A673 (cell line): ENCODE measurements at regions of chr11 and their contacts with region 1.

Region 1: DNA sequence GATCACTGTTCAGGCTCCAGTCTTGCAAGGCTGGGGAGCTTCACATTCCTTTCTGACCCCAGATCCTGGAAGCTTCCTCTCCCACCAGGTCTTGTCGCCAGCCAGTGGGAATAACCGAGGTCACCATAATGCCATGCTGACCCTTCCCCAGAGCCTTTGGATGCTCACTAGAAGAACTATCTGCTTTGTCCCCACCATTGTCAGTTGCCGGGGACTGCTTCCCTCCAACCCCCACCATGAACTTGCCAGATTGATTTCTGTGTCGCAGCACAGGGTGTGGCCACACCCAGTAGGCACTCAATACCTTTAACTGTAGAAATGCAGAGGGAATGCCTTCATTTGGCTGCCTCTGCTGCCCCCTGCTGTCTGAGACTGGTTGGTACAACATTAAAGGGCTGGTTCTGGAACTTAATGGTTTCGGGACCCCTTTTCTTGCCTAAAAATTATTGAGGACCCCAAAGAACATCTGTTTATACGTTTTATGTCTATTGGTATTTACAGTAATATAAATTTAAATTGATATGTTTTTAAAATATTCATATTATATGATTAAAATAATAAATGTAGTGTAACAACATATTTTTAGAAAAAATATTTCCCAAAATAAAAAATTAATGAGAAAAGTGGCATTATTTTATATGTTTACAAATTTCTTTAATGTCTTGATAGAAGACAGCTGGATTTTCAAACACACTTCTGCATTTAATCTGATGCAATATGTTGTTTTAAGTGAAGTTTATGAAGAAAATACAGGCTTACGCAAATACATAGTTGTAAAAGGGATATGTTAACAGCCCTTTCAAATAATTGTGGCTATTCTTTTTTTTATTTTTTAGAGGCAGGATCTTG is 6.7 kb upstream of the GDPD5 start:
- DNase-seq: peak; percentile 89
- H3K4me3 ChIP-seq: no peak overlapping the region
- H3K27ac ChIP-seq: no peak overlapping the region
- H3K4me1 ChIP-seq: peaks cover 7% of the 10 kb centered on the region
- H3K27me3 ChIP-seq: no peaks in the 10 kb centered on the region
- CTCF ChIP-seq: peak; percentile 96

Region 2: DNA sequence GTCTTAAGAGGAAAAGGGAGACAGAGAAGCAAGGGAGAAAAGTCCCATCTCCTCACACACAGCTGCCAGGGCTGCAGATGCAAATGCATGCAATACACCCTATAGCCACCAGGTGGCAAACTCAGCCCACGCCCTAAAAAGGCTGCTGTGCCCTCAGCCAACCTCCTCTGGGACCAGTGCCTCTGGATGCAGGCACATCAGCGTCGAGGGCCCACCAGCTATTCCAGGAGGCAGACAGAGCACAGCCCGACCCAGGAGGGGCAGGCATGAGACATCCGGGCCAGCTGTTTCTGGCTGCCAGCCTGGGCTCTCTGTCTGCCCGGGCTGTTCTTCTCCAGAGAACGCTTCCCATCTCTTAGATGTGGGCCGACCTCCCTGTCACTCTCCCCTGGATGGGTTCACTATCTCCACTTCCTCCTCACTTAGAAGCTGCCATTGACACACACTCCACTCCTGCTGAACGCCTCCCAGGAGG is 252.2 kb before region 1 on chr11:
- CTCF ChIA-PET with region 1: interaction called, 4 read pairs
- POLR2A ChIA-PET with region 1: no interaction called
- intact Hi-C with region 1: loop called (anchors 2 kb)
- DNase-seq: peak; percentile 85
- H3K4me3 ChIP-seq: no peak overlapping the region
- H3K27ac ChIP-seq: no peak overlapping the region
- H3K4me1 ChIP-seq: no peaks in the 10 kb centered on the region
- H3K27me3 ChIP-seq: no peaks in the 10 kb centered on the region
- CTCF ChIP-seq: peak; percentile 98

Region 3: DNA sequence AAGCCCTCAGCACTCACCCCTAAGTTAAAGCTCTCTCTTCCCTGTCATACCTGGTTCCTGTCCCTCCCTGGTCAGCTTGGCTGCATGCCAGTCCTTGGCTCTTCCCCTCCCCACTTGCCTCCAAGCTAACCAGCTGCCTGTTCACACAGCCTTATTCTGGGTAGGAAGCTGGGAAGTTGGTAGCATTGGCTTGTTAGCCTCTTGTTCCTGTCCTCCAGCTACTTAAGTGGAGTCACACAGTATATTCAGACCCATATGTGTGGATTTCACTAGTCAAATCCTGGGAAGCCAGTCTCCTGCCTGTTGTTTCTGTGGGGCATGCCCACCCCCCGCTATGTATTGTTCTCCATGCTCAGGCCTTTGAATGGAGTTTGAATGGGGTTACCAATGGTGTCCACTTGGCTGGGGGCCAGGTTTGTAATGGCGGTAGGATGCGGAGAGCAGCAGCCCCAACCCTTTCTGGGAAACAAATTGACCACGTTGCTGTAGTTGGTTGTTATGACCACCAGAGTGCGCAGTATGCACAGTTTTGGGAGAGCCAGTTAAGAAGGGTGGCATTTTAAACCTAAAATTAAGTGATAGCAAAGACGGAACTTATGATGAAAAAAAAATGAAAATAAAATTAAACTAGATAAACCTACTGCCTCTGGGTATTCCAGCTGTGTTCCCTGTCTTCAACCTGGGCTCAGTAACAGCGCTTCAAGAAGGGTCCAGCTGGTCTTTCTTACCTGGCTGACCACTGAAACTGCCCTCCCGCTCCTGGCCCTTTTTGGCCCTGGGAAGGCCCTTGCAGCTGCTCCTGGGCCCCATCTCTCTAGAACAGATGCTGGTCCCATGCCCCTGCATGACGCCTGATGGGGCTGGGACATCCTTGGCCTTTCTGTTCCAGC is 143.8 kb before region 1 on chr11:
- CTCF ChIA-PET with region 1: interaction called, 3 read pairs
- POLR2A ChIA-PET with region 1: no interaction called
- intact Hi-C with region 1: loop called (anchors 1 kb)
- DNase-seq: peak; percentile 92
- H3K4me3 ChIP-seq: no peak overlapping the region
- H3K27ac ChIP-seq: no peak overlapping the region
- H3K4me1 ChIP-seq: no peaks in the 10 kb centered on the region
- H3K27me3 ChIP-seq: no peaks in the 10 kb centered on the region
- CTCF ChIP-seq: peak; percentile 95

Region 4: DNA sequence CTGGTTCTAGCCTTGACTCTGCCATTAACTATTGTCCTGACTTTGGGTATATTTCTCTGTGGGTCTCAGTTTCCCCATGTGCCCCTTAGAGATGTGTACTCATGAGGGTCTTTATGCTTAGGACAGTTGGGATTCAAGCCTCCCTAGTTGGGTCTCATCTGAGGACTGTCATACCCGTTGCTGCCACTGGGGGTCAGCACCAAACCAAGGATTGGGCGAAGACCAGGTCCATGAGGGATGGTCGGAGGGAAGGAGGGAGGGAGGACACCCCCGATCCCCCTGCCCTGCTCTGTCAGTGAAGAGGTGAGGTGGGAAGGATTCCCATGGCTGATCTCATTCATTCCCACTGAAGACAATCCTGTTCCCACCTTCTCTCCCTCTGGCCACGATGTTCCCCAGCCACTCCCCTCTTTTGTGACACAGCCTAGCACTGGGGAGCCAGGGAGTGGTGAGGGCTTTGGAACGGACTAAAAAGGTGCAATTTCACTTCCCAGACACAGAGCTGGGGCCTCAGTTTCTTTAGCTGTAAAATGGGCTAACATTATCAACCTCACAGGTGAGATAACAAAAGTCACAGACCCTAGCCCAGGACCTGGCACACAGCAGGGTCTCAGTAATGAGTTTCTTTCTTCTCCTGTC is 87.0 kb before region 1 on chr11:
- CTCF ChIA-PET with region 1: interaction called, 3 read pairs
- POLR2A ChIA-PET with region 1: no interaction called
- intact Hi-C with region 1: loop called (anchors 1 kb)
- DNase-seq: peak; percentile 76
- H3K4me3 ChIP-seq: no peak overlapping the region
- H3K27ac ChIP-seq: no peak overlapping the region
- H3K4me1 ChIP-seq: no peaks in the 10 kb centered on the region
- H3K27me3 ChIP-seq: no peaks in the 10 kb centered on the region
- CTCF ChIP-seq: peak; percentile 97